ENCODE measurements at regions of chr1 and their contacts with region 1.

Region 1: GRCh38 chr1:180252638-180253536 is 22.8 kb downstream of the LHX4 start:
- DNase-seq: peak; percentile 63
- H3K4me3 ChIP-seq: no peak overlapping the region
- H3K27ac ChIP-seq: no peak overlapping the region
- H3K4me1 ChIP-seq: no peaks in the 10 kb centered on the region
- CTCF ChIP-seq: peak; percentile 94

Region 2: DNA sequence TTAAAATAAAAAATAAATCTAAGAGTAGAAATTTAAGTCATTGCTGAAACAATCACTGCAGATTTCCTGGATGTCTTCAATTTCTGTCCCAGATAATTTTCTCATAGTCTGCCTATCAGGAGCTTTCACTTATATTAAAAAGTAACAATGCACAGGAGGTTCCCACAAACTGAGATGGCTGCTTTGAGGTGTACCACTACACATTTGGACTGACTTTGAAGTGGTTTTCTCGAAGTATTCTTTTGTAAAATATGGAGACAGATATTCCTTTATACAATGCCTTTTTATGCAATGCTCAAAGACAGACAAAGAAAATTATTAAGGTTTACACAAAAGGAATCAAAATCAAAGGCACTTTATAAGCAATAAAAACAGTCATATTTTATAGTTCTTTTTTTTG is 399.8 kb before region 1 on chr1:
- CTCF ChIA-PET with region 1: no interaction called
- POLR2A ChIA-PET with region 1: no interaction called
- intact Hi-C with region 1: no loop called
- DNase-seq: no peak
- H3K4me3 ChIP-seq: no peak overlapping the region
- H3K27ac ChIP-seq: no peak overlapping the region
- H3K4me1 ChIP-seq: no peaks in the 10 kb centered on the region
- CTCF ChIP-seq: no peak

Region 3: GRCh38 chr1:180168786-180169639 is 83.9 kb before region 1 on chr1:
- CTCF ChIA-PET with region 1: no interaction called
- POLR2A ChIA-PET with region 1: no interaction called
- intact Hi-C with region 1: no loop called
- DNase-seq: peak; percentile 53
- H3K4me3 ChIP-seq: no peak overlapping the region
- H3K27ac ChIP-seq: no peak overlapping the region
- H3K4me1 ChIP-seq: no peaks in the 10 kb centered on the region
- CTCF ChIP-seq: peak; percentile 77

Region 4: GRCh38 chr1:180234369-180235076 is 18.4 kb before region 1 on chr1:
- CTCF ChIA-PET with region 1: no interaction called
- POLR2A ChIA-PET with region 1: no interaction called
- intact Hi-C with region 1: no loop called
- DNase-seq: no peak
- H3K4me3 ChIP-seq: no peak overlapping the region
- H3K27ac ChIP-seq: no peak overlapping the region
- H3K4me1 ChIP-seq: peaks cover 7% of the 10 kb centered on the region
- CTCF ChIP-seq: no peak

Region 5: DNA sequence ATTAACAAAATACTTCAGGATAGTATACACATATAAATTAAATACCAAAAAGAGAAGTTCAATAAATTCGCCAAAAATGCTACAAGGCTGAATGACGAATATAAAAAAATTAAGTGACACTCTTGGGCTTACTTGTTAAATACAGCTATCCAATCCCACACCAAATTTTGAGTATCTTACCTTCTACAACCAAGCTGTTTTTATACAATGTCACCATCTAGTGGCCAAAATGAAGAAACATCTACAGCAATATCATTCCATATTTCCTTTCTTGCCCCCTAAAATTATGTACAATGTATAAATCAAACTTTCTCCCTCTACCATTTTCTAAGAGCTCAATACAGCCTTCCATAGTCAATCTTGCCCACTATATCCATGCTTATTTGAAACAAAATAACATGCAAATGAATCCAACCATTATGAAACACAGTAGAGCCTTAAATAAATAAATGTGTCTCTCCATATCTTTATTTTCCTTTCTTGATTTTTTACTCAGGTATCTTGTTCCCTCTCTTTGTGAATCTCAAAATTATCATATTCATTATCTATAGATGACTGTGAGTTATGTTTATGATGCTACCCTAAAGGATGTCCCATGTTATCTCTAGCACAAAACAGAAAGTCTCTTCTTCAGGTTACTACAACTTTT is 163.2 kb after region 1 on chr1:
- CTCF ChIA-PET with region 1: no interaction called
- POLR2A ChIA-PET with region 1: interaction called, 3 read pairs
- intact Hi-C with region 1: loop called (anchors 1 kb)
- DNase-seq: peak; percentile 51
- H3K4me3 ChIP-seq: no peak overlapping the region
- H3K27ac ChIP-seq: no peak overlapping the region
- H3K4me1 ChIP-seq: no peaks in the 10 kb centered on the region
- CTCF ChIP-seq: peak; percentile 92

Region 6: DNA sequence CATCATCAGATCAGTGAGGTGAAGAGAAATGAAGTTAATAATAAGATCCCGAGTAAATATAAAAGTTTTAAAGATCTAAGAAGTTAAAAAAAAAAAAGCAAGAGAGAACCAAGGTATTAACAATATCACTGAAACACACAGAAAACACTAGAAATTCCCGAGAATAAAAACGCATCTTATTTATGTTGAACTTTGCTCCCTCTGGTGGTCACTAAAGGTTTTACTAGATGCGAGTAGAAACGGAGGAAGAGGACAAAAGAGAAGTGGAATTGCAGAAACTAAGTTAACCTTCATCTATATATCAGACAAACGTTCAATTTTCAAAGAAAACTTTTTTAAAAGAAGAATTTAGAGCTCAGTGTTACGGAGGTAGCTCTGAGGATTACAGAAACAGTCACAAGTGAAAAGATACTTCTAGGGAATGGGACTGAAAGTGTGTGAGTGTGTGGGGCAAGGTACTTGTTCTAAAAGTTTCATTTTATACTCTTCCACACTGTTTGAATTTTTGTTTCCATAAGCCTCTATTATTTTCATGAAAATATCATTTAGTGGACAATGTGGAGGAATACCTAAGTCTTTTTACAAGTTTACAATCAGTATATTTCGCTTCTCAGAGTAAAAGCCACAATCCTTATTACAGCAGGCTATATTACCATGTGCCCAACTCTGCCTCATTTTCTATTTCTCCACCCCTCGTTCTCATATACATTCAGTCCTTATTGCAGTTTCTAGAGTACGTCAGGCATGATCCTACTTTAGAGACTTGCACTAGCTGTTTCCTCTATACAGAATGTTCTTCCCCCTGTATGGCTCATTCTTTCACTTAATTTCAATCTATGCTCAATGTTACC is 229.8 kb after region 1 on chr1:
- CTCF ChIA-PET with region 1: no interaction called
- POLR2A ChIA-PET with region 1: interaction called, 3 read pairs
- intact Hi-C with region 1: loop called (anchors 1 kb)
- DNase-seq: peak; percentile 67
- H3K4me3 ChIP-seq: no peak overlapping the region
- H3K27ac ChIP-seq: no peak overlapping the region
- H3K4me1 ChIP-seq: no peaks in the 10 kb centered on the region
- CTCF ChIP-seq: peak; percentile 96

Measured in OCI-LY7 (cell line).